ENCODE measurements at regions of chr18 and their contacts with region 1.

Region 1: DNA sequence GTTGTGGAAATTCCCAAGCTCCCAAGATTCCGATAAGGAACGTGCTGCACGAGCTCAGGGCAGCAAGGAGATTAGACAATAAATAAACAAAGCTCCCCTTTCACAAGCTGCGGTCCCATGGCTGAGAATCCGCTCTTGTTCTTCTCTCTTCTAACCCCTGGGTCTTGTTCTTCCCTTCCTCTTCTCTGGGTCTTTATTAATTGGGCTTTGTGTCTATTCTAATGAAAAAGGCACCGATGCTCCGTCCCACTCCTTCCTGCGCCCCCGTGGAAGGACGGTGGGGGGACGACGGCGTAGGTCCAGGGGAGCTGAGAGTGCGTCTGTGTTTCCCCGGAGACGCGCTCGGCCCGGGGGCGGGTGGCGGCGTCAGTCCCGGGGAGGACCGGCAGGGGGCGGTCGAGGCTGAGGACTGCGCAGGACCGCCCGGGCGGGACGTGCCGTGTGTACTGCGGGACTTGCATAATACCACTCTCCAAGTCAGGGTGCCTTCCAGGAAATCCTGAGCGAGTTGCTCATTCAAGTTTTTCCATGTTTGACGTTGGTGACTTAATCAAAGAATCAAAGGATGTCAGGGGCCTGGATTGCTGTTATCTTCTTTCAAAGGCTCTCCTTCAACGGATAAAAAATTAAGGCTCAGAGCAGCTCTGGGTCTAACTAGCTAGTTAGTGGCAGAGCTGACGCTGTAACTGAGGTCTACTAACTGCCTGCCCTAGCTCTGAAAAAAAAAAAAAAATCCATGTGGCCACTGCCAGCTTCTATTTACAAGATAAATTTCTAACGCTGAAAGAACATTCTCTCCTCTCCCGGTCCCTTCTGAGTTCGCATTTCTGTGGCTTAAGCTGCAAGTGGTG is 321.4 kb downstream of the TGIF1 start:
- DNase-seq: peak; percentile 49 to 55
- ATAC-seq: peak; percentile 76 to 80
- H3K4me3 ChIP-seq: peak overlapping the region; percentile 25 to 32 (median 29)
- H3K27ac ChIP-seq: peak overlapping the region in 1 of 4 donors; percentile 29
- H3K4me1 ChIP-seq: peaks cover 0 to 4% of the 10 kb centered on the region in 2 donors
- H3K27me3 ChIP-seq: no peaks in the 10 kb centered on the region
- CTCF ChIP-seq: peak; percentile 55 to 84 (median 79)
- POLR2A ChIP-seq: no peak

Region 2: DNA sequence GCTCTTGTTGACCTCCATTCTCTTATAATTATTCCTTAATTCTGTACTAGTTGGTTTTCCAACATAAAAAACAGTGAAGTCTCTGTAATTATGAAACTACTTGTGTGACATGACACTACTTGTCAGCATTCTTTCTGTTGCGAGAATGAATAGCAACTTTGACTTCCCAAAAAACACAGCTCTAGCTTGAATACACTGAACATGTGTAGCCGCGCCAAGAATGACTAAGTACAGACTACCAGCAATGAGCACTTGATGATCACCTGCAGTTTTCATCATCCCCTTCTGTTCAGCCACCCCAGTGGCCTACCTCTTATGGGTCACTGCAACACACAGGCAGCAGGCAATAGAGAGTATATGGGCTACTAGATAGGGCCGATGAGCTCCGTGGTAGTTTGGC is 92.1 kb before region 1 on chr18:
- in situ Hi-C with region 1: no loop called
- intact Hi-C with region 1: no loop called
- DNase-seq: no peak
- ATAC-seq: no peak
- H3K4me3 ChIP-seq: no peak overlapping the region
- H3K27ac ChIP-seq: no peak overlapping the region
- H3K4me1 ChIP-seq: no peaks in the 10 kb centered on the region
- H3K27me3 ChIP-seq: no peaks in the 10 kb centered on the region
- CTCF ChIP-seq: no peak
- POLR2A ChIP-seq: no peak

Region 3: DNA sequence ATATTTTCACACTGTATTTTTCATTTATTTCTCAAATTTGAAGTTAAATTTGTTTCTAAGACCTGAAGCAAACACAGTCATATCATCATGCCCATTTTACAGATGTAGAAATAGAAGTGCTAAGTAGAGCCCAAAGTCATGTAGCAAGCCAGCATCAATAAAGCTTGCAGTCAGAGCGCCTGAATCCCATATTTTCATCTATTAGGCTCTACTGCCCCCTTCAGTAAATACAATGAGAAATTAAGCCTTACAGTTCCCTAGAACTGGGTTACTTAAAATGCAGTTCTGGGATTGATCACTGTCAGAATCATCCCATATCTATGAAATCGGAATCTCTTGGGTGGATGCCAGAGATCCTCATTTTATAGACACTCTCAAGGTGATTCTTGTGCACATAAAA is 98.5 kb after region 1 on chr18:
- in situ Hi-C with region 1: no loop called
- intact Hi-C with region 1: loop called (anchors 2 kb)
- DNase-seq: no peak
- ATAC-seq: no peak
- H3K4me3 ChIP-seq: no peak overlapping the region
- H3K27ac ChIP-seq: no peak overlapping the region
- H3K4me1 ChIP-seq: no peaks in the 10 kb centered on the region
- H3K27me3 ChIP-seq: no peaks in the 10 kb centered on the region
- CTCF ChIP-seq: no peak
- POLR2A ChIP-seq: no peak

Region 4: GRCh38 chr18:3995476-3996102 is 224.2 kb after region 1 on chr18:
- in situ Hi-C with region 1: loop called in 3 of 4 experiments (anchors 25 kb)
- intact Hi-C with region 1: loop called (anchors 2 kb)
- DNase-seq: no peak
- ATAC-seq: no peak
- H3K4me3 ChIP-seq: no peak overlapping the region
- H3K27ac ChIP-seq: no peak overlapping the region
- H3K4me1 ChIP-seq: no peaks in the 10 kb centered on the region
- H3K27me3 ChIP-seq: no peaks in the 10 kb centered on the region
- CTCF ChIP-seq: peak in 2 of 5 experiments; percentile 70
- POLR2A ChIP-seq: no peak

Region 5: DNA sequence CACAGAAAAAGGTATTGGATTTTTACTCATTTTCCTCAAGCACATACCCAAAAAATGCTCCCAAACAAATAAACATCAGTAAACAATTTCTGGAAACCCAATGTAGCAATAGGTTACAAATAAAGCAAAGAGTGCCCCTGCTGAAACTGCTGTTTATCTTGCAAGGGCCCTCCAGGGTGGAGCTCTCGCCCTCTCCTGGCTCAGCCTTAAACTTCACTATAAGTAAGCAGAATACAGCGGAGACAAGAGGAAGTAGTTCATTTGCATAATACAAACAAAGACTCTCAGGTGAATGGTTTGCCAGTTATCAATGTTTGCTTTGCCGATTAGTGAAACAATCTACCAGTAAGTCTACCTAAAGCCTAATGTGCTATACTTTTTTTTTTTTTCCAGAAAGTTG is 246.1 kb after region 1 on chr18:
- in situ Hi-C with region 1: loop called in 2 of 4 experiments (anchors 25 kb)
- intact Hi-C with region 1: no loop called
- DNase-seq: no peak
- ATAC-seq: no peak
- H3K4me3 ChIP-seq: no peak overlapping the region
- H3K27ac ChIP-seq: no peak overlapping the region
- H3K4me1 ChIP-seq: no peaks in the 10 kb centered on the region
- H3K27me3 ChIP-seq: no peaks in the 10 kb centered on the region
- CTCF ChIP-seq: no peak
- POLR2A ChIP-seq: no peak

Measured in gastrocnemius medialis (tissue), 4 donors.